CD14-positive monocyte (primary cell): ENCODE measurements at regions of chr5 and their contacts with region 1.

Region 1: DNA sequence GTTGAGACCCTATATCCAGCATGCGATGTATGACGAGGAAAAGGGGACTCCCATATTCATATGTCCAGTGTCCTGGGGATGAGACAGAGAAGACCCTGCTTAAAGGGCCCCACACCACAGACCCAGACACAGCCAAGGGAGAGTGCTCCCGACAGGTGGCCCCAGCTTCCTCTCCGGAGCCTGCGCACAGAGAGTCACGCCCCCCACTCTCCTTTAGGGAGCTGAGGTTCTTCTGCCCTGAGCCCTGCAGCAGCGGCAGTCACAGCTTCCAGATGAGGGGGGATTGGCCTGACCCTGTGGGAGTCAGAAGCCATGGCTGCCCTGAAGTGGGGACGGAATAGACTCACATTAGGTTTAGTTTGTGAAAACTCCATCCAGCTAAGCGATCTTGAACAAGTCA is 17.1 kb downstream of the BTNL3 start:
- DNase-seq: no peak
- H3K4me3 ChIP-seq: no peak overlapping the region
- H3K4me3 Mint-ChIP-seq: no peak overlapping the region
- H3K27ac ChIP-seq: no peak overlapping the region
- H3K27ac Mint-ChIP-seq: no peak overlapping the region
- H3K4me1 ChIP-seq: no peaks in the 10 kb centered on the region
- H3K4me1 Mint-ChIP-seq: no peaks in the 10 kb centered on the region
- H3K27me3 ChIP-seq: no peaks in the 10 kb centered on the region
- H3K27me3 Mint-ChIP-seq: peaks cover 2 to 3% (median 2%) of the 10 kb centered on the region in 3 donors
- CTCF ChIP-seq: no peak

Region 2: DNA sequence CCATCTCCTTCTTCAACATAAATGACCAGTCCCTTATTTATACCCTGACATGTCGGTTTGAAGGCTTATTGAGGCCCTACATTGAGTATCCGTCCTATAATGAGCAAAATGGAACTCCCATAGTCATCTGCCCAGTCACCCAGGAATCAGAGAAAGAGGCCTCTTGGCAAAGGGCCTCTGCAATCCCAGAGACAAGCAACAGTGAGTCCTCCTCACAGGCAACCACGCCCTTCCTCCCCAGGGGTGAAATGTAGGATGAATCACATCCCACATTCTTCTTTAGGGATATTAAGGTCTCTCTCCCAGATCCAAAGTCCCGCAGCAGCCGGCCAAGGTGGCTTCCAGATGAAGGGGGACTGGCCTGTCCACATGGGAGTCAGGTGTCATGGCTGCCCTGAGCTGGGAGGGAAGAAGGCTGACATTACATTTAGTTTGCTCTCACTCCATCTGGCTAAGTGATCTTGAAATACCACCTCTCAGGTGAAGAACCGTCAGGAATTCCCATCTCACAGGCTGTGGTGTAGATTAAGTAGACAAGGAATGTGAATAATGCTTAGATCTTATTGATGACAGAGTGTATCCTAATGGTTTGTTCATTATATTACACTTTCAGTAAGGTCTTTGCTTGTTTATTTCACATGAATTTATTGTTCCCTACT is 55.4 kb before region 1 on chr5:
- intact Hi-C with region 1: loop called in 1 of 2 experiments (anchors 1 kb)
- DNase-seq: no peak
- H3K4me3 ChIP-seq: no peak overlapping the region
- H3K4me3 Mint-ChIP-seq: no peak overlapping the region
- H3K27ac ChIP-seq: no peak overlapping the region
- H3K27ac Mint-ChIP-seq: no peak overlapping the region
- H3K4me1 ChIP-seq: no peaks in the 10 kb centered on the region
- H3K4me1 Mint-ChIP-seq: no peaks in the 10 kb centered on the region
- H3K27me3 ChIP-seq: no peaks in the 10 kb centered on the region
- H3K27me3 Mint-ChIP-seq: peaks cover 5 to 7% (median 6%) of the 10 kb centered on the region in 3 donors
- CTCF ChIP-seq: no peak

Region 3: GRCh38 chr5:181037365-181037861 is 31.6 kb after region 1 on chr5:
- intact Hi-C with region 1: no loop called
- DNase-seq: no peak
- H3K4me3 ChIP-seq: no peak overlapping the region
- H3K4me3 Mint-ChIP-seq: no peak overlapping the region
- H3K27ac ChIP-seq: no peak overlapping the region
- H3K27ac Mint-ChIP-seq: peak overlapping the region in 1 of 7 donors; percentile 53
- H3K4me1 ChIP-seq: no peaks in the 10 kb centered on the region
- H3K4me1 Mint-ChIP-seq: no peaks in the 10 kb centered on the region
- H3K27me3 ChIP-seq: no peaks in the 10 kb centered on the region
- H3K27me3 Mint-ChIP-seq: peaks cover 9 to 24% (median 16%) of the 10 kb centered on the region in 3 donors
- CTCF ChIP-seq: no peak